ENCODE measurements at regions of chr16 and their contacts with region 1.

Region 1: DNA sequence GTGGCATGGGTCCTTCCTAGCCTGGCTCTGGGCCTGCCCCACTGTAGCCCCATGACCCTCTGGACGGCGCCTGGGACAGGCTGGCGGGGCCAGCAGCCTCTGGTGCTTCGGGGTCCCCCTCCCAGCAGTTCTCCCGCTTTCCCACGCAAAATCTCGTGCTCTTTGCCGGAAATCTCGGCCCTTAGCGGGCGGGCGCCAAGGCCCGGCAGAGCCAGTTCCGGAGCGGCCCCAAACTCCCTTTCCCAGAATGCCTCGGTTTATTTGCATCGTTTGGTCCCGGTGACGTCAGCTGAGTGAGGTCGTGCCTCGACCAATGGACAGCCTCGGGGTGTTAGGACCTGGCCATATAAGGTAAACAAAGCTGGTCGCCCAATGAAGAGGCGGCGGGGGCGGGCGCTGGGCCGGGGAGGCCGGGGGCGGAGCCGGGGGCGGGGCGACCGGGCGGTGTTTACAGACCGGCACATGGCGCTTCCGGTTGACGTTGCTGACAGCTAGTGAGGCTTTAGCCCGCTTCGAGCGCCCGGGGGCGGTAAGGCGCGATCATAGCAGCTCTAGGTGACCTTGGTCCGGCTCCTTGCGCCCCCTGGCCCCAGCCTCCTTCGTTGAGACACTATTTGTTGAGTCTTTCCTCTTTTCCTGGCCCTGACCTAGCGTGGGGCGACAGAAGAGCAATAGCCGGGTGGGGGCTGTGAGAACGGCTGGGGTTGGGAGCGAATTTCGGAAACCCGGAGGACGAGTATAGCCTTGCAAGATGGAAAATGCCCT is 1.5 kb upstream of the UBALD1 start:
- DNase-seq: peak; percentile 100
- ATAC-seq: peak; percentile 89
- H3K4me3 Mint-ChIP-seq: peak overlapping the region; percentile 86
- H3K27ac Mint-ChIP-seq: peak overlapping the region; percentile 95
- H3K4me1 Mint-ChIP-seq: peaks cover 17% of the 10 kb centered on the region
- H3K27me3 Mint-ChIP-seq: no peaks in the 10 kb centered on the region

Region 2: GRCh38 chr16:3717235-3718018 is 898.8 kb before region 1 on chr16 and contains the start of gene TRAP1:
- CTCF ChIA-PET with region 1: no interaction called
- POLR2A ChIA-PET with region 1: no interaction called
- intact Hi-C with region 1: loop called in 1 of 2 experiments (anchors 1 kb)
- DNase-seq: peak; percentile 95
- ATAC-seq: peak; percentile 95
- H3K4me3 Mint-ChIP-seq: peak within 1 kb of the TSS; percentile 89
- H3K27ac Mint-ChIP-seq: peak within 1 kb of the TSS; percentile 92
- H3K4me1 Mint-ChIP-seq: peaks cover 44% of the 10 kb centered on the region
- H3K27me3 Mint-ChIP-seq: no peaks in the 10 kb centered on the region
- total RNA-seq, gene TRAP1: 306 to 360 TPM

Region 3: DNA sequence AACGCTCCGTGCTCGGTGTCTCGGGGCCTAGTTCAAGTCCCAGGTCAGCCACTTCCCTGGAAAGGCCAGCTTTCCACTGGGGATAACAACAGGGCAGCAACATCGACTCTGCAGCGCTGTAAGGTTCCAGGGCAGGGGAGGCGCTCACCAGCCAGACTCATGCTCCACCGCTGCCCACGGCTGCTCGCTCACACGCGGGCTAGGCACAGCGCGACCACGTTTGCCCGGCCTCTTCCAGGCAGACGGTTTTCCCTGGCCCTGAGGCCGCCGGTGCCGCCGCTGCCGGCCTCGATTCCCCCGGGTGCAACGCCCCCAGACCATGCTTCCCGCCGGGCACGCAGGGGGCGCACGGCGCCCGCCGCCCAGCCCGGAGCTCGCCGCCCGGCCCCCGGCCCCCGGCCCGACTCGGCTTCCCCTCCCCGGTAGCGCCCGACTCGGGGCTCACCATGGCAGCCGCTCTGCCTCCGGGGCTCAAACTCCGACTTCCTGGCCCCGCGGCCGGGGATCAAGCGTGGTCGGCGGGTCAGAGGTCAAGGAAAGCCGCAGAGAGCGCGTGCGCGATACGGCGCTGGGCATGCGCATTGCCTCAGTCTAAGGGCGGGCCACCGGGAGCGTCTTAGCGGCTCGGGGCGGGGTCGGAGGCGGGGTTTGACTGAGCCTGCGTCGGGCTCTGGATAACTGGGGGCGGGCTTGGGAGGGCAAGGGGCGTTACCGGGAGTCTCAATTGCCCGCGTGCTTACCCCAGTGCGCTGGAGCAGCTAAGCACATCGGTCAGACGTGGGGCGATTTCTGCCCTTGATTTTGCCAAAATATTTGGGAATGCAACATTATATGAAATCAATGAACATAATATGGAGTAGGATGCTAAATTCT is 265.2 kb before region 1 on chr16 and contains the start of gene PAM16:
- CTCF ChIA-PET with region 1: no interaction called
- POLR2A ChIA-PET with region 1: no interaction called
- intact Hi-C with region 1: loop called in 1 of 2 experiments (anchors 1 kb)
- DNase-seq: peak; percentile 99
- ATAC-seq: peak; percentile 96
- H3K4me3 Mint-ChIP-seq: peak within 1 kb of the TSS; percentile 89
- H3K27ac Mint-ChIP-seq: peak within 1 kb of the TSS; percentile 88
- H3K4me1 Mint-ChIP-seq: peaks cover 20% of the 10 kb centered on the region
- H3K27me3 Mint-ChIP-seq: no peaks in the 10 kb centered on the region
- total RNA-seq, gene PAM16: 62.8 to 67.8 TPM

Region 4: DNA sequence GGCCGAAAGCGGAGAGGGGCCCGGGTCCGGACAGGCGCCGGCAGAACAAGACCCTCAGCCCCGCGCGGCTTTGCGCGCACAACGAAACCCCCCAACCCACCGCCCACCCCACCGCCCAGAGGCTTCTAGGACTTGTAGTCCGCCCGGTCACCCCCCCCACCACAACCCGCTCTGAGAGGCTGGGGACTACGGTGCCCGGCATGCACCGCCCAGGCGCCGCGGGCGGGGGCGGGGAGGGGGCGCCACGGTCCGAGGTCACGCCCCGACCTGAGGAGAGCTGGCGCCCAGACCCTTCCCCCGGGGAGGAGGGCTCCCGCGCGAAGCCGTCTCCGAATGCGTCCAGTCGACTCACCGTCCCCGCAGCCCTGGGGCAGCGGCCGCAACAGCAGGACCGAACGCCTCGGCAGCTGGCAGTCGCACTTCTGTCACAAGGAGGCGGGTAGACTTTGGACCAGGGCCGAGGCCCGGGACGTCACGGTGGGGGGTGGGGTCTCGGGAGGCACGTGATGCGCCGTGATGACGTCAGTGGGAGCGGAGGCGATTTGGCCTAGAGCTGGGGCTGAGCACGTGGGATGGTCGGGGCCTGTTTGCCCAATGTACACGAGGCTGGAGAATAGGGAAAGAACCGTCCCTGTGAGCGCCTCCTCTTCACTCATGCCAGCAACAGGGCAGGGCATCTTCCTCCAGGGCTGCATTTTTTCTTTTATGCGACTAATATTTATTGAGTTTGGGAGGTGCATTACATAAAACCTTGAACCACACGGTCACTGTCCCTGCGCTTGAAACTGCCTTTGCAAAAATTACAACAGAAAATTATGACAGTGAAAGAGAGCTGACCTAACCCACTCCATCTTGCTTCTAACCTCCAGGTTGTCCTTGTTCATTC is 77.6 kb before region 1 on chr16 and contains the start of gene CDIP1:
- CTCF ChIA-PET with region 1: no interaction called
- POLR2A ChIA-PET with region 1: no interaction called
- intact Hi-C with region 1: loop called in 1 of 2 experiments (anchors 1 kb)
- DNase-seq: peak; percentile 99
- ATAC-seq: peak; percentile 81
- H3K4me3 Mint-ChIP-seq: peak within 1 kb of the TSS; percentile 75
- H3K27ac Mint-ChIP-seq: peak within 1 kb of the TSS; percentile 63
- H3K4me1 Mint-ChIP-seq: peaks cover 41% of the 10 kb centered on the region
- H3K27me3 Mint-ChIP-seq: no peaks in the 10 kb centered on the region
- total RNA-seq, gene CDIP1: 28.3 to 30.2 TPM

Region 5: DNA sequence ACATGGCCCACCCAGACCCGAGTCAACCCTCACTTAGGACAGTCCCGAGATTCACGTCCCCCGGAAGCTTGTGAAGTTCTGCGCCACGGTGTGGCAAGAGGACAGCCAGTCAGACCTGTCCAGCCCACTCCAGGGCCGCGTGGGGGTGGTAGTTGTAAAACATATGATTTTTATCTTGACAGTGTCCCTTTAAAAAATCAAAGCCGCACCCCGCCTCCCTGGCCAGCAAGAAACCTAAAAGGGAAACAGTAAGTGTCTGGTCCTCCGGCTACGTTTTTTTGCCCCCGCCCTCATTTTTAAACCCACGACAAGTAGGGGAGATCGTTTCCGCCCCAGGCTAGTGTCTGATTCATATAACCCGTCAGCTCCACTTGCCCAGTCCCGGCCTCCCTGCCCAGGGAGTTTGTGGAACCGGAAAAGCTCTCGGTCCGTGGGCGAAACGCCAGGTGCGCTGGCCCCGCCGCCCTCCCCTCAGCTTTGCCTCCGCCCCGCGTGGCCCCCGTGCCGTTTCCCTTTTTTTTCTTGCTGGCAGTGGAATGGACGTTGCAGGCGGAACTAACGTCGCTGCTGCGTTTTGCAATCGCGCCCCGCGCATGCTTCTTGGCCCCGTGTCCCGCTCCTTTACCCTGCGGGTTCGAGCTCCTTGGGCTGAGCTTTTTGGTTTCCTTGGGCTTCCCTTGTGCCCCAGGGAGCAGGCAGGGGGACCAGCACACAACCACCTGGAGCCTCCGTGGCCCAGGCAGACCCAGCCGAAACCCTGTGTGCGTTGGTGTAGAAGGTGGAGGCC is 63.8 kb after region 1 on chr16:
- CTCF ChIA-PET with region 1: no interaction called
- POLR2A ChIA-PET with region 1: no interaction called
- intact Hi-C with region 1: loop called in 1 of 2 experiments (anchors 1 kb)
- DNase-seq: peak; percentile 17
- ATAC-seq: no peak
- H3K4me3 Mint-ChIP-seq: no peak overlapping the region
- H3K27ac Mint-ChIP-seq: peak overlapping the region; percentile 31
- H3K4me1 Mint-ChIP-seq: peaks cover 27% of the 10 kb centered on the region
- H3K27me3 Mint-ChIP-seq: no peaks in the 10 kb centered on the region

Region 6: GRCh38 chr16:4766874-4767628 is 150.8 kb after region 1 on chr16 and contains the start of gene ZNF500:
- CTCF ChIA-PET with region 1: interaction called, 3 read pairs
- POLR2A ChIA-PET with region 1: interaction called, 3 read pairs
- intact Hi-C with region 1: loop called in 1 of 2 experiments (anchors 1 kb)
- DNase-seq: peak; percentile 97
- ATAC-seq: peak; percentile 78
- H3K4me3 Mint-ChIP-seq: peak within 1 kb of the TSS; percentile 89
- H3K27ac Mint-ChIP-seq: peak within 1 kb of the TSS; percentile 91
- H3K4me1 Mint-ChIP-seq: peaks cover 25% of the 10 kb centered on the region
- H3K27me3 Mint-ChIP-seq: no peaks in the 10 kb centered on the region
- total RNA-seq, gene ZNF500: 10.3 to 11.6 TPM

Region 7: DNA sequence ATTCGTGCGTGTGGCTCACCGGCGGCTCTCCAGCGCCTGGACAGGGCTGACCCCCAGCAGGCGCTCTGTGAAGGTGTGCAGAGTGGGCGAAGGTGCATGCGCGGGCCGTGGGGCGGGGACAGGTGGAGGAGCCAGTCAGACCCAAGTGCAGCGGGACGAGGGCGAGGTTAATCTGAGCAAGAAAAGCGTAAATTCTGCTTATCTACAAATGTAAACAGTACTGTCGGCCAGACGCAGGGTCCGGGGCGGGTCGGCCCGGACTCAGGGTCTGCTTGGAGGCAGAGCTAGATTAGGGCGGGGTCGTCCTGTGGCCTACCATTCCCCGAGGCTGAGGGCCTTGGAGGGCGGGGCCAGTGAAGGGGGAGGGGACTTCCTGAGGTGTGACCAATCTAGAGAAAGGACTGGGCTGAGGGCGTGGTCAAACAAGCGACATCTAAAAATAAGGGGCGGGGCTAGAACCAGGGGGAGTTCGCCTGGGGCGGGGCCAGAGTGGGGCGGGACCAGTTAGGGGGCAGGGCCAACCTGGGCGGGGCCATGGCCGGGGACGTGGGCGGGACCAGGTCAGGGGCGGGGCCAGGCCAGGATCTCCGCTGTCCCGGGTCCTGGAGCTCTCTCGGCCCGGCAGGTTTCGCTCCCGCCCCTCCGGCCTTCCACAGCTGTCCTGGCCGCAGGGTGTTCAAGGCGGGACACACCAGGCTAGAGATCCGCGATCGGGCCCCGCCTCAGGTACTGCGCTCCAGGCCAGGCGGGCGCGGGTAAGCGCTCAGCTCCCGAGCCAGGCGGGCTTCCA is 341.7 kb after region 1 on chr16 and contains the start of gene SEC14L5:
- CTCF ChIA-PET with region 1: no interaction called
- POLR2A ChIA-PET with region 1: no interaction called
- intact Hi-C with region 1: loop called in 1 of 2 experiments (anchors 1 kb)
- DNase-seq: peak; percentile 98
- ATAC-seq: peak; percentile 95
- H3K4me3 Mint-ChIP-seq: peak within 1 kb of the TSS; percentile 75
- H3K27ac Mint-ChIP-seq: peak within 1 kb of the TSS; percentile 1
- H3K4me1 Mint-ChIP-seq: peaks cover 12% of the 10 kb centered on the region
- H3K27me3 Mint-ChIP-seq: peaks cover 33% of the 10 kb centered on the region
- total RNA-seq, gene SEC14L5: 0.09 to 0.28 TPM

Measured in activated CD4-positive, alpha-beta T cell treated with anti-CD3 and anti-CD28 coated beads for 36 hours (primary cell).